ENCODE measurements at regions of chr5 and their contacts with region 1.

Region 1: DNA sequence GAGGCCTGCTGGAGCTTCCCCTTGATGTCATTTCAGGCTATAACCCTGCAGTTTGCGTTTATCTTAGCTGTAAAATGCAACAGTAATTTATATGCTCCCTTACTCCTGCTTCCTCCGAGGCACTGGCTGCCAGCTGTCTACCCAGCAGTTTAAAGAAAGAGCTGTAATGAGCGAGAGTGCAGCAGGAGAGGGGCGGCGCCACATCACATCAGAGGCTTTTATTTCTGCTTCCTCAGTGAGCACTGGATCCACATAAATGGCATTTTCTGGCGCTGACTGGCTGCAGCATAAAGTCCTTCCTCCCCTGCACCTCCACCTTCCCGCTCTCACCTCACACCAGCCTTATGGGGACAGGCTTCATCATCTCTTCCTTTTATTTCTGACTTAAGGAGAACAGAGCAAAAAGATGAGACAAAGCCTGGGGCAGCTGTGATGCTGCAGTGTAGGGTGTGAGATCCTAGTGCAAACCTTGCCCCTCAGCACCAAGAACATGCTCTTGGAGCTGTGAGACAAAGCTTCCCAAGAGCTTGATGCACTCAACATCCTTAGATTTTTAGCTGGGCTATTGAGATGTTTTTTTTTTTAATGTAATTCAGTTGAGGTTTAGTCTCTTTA is 829.6 kb upstream of the ZNF608 start:
- DNase-seq: no peak
- ATAC-seq: peak; percentile 88
- H3K4me3 ChIP-seq: peak overlapping the region in 1 of 2 experiments; percentile 13; a peak in 1 of 4 replicates
- H3K27ac ChIP-seq: peak overlapping the region; percentile 81
- H3K4me1 ChIP-seq: peaks cover 38% of the 10 kb centered on the region
- H3K27me3 ChIP-seq: no peaks in the 10 kb centered on the region
- CTCF ChIP-seq: no peak

Region 2: DNA sequence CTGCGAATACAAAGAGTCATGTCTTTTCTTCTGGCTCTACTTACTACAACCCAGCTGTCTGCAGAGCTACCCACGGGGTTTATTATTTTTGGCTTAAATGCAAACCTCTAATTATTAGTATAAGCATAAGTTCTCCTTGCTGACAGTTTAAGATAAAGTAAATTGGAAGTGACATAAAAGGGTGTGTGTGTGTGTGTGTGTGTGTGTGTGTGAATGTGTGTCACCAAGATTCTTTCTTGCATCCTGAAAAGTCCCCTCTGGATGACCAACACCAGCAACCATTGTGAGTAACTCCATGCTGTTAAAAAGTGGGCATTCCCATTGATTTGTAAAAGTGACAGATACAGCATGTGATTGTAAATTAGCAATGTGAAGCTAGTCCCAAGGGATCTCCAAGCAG is 25.7 kb before region 1 on chr5:
- CTCF ChIA-PET with region 1: no interaction called
- POLR2A ChIA-PET with region 1: interaction called, 14 read pairs
- in situ Hi-C with region 1: no loop called
- intact Hi-C with region 1: no loop called
- DNase-seq: no peak
- ATAC-seq: peak; percentile 79
- H3K4me3 ChIP-seq: no peak overlapping the region
- H3K27ac ChIP-seq: peak overlapping the region; percentile 94
- H3K4me1 ChIP-seq: peaks cover 29% of the 10 kb centered on the region
- H3K27me3 ChIP-seq: no peaks in the 10 kb centered on the region
- CTCF ChIP-seq: no peak